ENCODE measurements at regions of chr11 and their contacts with region 1.

Region 1: GRCh38 chr11:10885703-10886363 is 28.0 kb upstream of the ZBED5 start:
- DNase-seq: no peak
- H3K4me3 ChIP-seq: no peak overlapping the region
- H3K27ac ChIP-seq: no peak overlapping the region
- H3K4me1 ChIP-seq: peaks cover 3% of the 10 kb centered on the region
- H3K27me3 ChIP-seq: no peaks in the 10 kb centered on the region
- CTCF ChIP-seq: no peak

Region 2: DNA sequence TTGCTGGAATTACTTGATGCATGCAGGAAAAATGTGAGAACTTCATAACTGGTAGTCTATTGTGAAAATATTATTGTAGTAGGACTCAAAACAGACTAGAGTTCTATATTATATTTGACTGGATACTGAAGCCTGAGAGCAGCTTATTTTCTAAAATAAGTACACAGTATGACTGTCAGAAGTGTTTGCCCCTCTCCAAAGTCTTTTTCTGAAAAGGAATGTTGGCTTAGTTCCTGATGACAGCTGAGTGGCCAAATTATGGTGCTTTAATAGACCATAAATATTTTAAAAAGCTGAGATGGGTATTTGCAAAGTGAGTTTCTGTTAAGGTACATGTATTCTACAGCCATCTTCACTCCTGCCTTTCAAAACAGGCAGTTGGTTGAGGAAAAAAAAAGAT is 41.0 kb before region 1 on chr11:
- CTCF ChIA-PET with region 1: no interaction called
- dilution Hi-C with region 1: loop called (anchors 5 kb)
- in situ Hi-C with region 1: no loop called
- intact Hi-C with region 1: no loop called
- DNase-seq: no peak
- H3K4me3 ChIP-seq: no peak overlapping the region
- H3K27ac ChIP-seq: no peak overlapping the region
- H3K4me1 ChIP-seq: peaks cover 8% of the 10 kb centered on the region
- H3K27me3 ChIP-seq: no peaks in the 10 kb centered on the region
- CTCF ChIP-seq: no peak

Region 3: DNA sequence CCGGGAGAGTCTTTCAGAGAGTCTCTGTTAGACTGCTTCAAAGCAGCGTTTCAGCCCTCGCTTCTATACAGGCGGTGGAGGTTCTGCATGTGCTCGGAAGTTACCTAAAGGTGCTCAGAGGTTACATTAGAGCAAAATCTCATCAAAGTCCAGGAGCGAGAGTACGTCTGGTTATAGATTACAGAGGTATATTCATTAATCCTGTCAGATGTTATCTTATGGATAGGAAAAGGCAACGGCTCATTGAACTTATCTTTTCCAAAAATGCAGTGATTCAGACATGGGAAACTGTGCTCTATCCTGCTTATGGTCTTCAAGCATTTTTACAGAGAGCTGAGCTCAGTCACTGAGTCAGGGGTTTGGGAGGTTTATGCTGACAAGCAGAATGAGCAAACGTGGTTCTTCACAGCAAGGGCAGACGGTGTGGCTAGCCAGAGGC is 18.9 kb before region 1 on chr11:
- CTCF ChIA-PET with region 1: no interaction called
- dilution Hi-C with region 1: no loop called
- in situ Hi-C with region 1: no loop called
- intact Hi-C with region 1: no loop called
- DNase-seq: no peak
- H3K4me3 ChIP-seq: no peak overlapping the region
- H3K27ac ChIP-seq: no peak overlapping the region
- H3K4me1 ChIP-seq: no peaks in the 10 kb centered on the region
- H3K27me3 ChIP-seq: no peaks in the 10 kb centered on the region
- CTCF ChIP-seq: no peak

Region 4: GRCh38 chr11:10938231-10938630 is 52.4 kb after region 1 on chr11:
- CTCF ChIA-PET with region 1: no interaction called
- dilution Hi-C with region 1: no loop called
- in situ Hi-C with region 1: no loop called
- intact Hi-C with region 1: no loop called
- DNase-seq: no peak
- H3K4me3 ChIP-seq: no peak overlapping the region
- H3K27ac ChIP-seq: no peak overlapping the region
- H3K4me1 ChIP-seq: peaks cover 6% of the 10 kb centered on the region
- H3K27me3 ChIP-seq: no peaks in the 10 kb centered on the region
- CTCF ChIP-seq: no peak

Measured in mammary epithelial cell (primary cell).